Activated naive CD4-positive, alpha-beta T cell treated with anti-CD3 and anti-CD28 coated beads for 36 hours (primary cell): ENCODE measurements at regions of chrX and their contacts with region 1.

Region 1: DNA sequence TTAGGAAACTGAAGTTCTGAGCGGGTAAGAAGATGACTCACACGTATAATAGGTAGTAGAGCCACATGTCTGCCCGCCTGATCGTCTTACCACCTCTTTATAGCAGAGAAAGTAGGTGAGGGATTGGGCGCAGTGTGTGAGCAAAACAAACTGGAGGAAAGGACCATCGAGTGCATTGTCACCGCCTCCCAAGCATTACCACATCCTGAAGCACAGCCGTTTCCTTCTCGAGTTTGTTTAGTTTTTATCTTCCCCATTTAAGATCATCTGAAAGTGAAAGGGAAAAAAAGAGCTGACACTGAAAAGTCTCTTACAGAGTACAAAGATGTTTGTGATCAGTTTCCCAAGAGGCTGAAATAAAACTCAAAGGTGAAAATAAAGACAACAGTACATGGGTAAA is 14.8 kb downstream of the PDK3 start:
- DNase-seq: peak; percentile 86
- H3K4me3 Mint-ChIP-seq: peak overlapping the region; percentile 69
- H3K27ac Mint-ChIP-seq: peak overlapping the region; percentile 96
- H3K4me1 Mint-ChIP-seq: peaks cover 69% of the 10 kb centered on the region
- H3K27me3 Mint-ChIP-seq: no peaks in the 10 kb centered on the region

Region 2: GRCh38 chrX:23952984-23953907 is 526.7 kb before region 1 on chrX:
- CTCF ChIA-PET with region 1: no interaction called
- intact Hi-C with region 1: loop called (anchors 2 kb)
- DNase-seq: peak; percentile 70
- H3K4me3 Mint-ChIP-seq: peak overlapping the region; percentile 79
- H3K27ac Mint-ChIP-seq: peak overlapping the region; percentile 97
- H3K4me1 Mint-ChIP-seq: peaks cover 16% of the 10 kb centered on the region
- H3K27me3 Mint-ChIP-seq: no peaks in the 10 kb centered on the region

Region 3: DNA sequence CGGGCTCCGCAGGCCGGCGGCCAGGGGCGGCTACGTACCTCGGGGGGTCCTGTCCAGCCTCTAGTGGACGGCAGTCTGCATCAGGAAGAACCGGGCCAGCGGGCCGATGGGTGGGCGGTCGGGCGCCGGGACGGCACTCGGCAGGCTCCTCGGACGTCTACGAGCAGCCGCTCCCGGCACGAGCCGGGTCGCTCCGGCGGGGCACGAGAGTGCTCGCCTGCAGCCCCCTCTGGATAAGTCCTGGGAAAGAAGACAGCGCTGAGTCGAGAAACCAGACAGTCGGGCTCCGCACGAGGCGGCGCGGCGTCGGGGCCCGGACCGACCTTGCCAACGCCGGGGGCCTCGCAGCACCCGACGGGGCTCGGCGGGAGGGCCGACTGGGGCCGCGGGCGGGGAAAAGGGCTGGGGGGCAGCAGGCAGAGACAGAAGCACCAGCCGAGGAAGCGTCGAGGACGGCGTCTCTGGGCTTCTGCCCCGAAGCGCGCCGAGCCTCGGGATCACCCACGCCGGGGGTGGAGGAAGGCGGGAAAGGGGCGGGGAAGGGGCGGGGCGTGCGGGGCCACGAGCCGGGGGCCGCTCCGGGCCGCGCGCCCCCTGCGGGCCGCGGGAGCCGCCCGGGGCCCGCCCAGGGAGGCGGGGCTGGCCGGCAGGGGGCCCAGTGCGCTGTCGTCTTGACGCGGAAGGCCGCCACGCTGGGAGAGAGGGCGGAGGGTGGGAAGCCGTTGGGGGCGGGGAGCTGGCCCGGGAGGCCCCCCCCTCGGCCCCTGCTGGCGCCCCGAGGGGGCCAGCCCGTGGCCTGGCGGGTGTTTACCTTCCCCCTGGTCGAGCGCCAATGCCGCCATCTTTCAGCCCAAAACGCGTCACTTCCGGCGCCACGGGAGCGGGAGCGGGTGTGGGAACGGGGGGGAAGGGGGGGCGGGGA is 454.8 kb before region 1 on chrX:
- CTCF ChIA-PET with region 1: no interaction called
- intact Hi-C with region 1: loop called (anchors 10 kb)
- DNase-seq: peak; percentile 89
- H3K4me3 Mint-ChIP-seq: peak overlapping the region; percentile 85
- H3K27ac Mint-ChIP-seq: peak overlapping the region; percentile 71
- H3K4me1 Mint-ChIP-seq: peaks cover 20% of the 10 kb centered on the region
- H3K27me3 Mint-ChIP-seq: no peaks in the 10 kb centered on the region

Region 4: GRCh38 chrX:24464836-24465531 is 14.9 kb before region 1 on chrX and contains the start of gene PDK3:
- CTCF ChIA-PET with region 1: interaction called, 3 read pairs
- intact Hi-C with region 1: loop called (anchors 1 kb)
- DNase-seq: peak; percentile 85
- H3K4me3 Mint-ChIP-seq: peak within 1 kb of the TSS; percentile 81
- H3K27ac Mint-ChIP-seq: peak within 1 kb of the TSS; percentile 82
- H3K4me1 Mint-ChIP-seq: peaks cover 30% of the 10 kb centered on the region
- H3K27me3 Mint-ChIP-seq: no peaks in the 10 kb centered on the region
- total RNA-seq, gene PDK3: 31.7 to 32.3 TPM

Region 5: DNA sequence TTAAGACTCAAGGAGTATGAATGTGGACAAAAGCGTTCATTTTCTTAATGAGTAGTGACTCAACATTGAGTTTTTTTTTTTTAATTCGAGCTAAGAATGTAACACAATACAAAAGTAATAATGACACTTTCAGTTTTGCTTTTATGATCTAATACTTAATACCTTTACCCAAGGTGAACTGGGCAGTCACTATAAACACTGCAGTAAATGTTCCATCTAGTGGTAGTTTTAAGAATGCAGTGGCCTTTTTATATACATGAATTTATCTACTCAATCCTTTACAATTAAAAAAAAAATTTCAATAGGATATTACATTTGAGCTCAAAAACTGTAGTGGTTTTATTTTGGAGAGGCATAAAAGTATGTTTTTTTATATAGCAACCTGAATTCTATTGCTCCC is 19.1 kb after region 1 on chrX:
- CTCF ChIA-PET with region 1: interaction called, 23 read pairs
- intact Hi-C with region 1: loop called (anchors 1 kb)
- DNase-seq: no peak
- H3K4me3 Mint-ChIP-seq: no peak overlapping the region
- H3K27ac Mint-ChIP-seq: no peak overlapping the region
- H3K4me1 Mint-ChIP-seq: peaks cover 24% of the 10 kb centered on the region
- H3K27me3 Mint-ChIP-seq: no peaks in the 10 kb centered on the region

Region 6: DNA sequence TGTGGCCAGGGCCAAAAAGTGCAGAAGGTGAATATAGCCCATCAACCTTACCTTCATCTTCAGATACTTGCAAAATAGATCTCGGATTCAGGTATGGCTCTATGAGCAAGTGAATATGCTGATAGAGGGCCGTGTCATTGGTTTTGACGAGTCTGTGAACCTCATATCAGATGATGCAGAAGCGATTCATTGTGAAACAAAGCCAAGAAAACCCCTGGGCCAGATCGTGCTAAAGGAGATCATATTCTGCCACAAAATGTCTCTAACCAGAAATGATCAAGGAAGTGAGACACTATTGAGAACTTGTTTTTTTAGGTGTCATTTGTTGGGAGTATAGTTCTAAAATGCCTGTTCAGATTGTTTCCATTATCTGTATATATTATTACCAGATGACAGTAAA is 33.5 kb after region 1 on chrX:
- CTCF ChIA-PET with region 1: interaction called, 4 read pairs
- intact Hi-C with region 1: loop called (anchors 1 kb)
- DNase-seq: peak; percentile 75
- H3K4me3 Mint-ChIP-seq: no peak overlapping the region
- H3K27ac Mint-ChIP-seq: peak overlapping the region; percentile 58
- H3K4me1 Mint-ChIP-seq: peaks cover 16% of the 10 kb centered on the region
- H3K27me3 Mint-ChIP-seq: no peaks in the 10 kb centered on the region

Region 7: DNA sequence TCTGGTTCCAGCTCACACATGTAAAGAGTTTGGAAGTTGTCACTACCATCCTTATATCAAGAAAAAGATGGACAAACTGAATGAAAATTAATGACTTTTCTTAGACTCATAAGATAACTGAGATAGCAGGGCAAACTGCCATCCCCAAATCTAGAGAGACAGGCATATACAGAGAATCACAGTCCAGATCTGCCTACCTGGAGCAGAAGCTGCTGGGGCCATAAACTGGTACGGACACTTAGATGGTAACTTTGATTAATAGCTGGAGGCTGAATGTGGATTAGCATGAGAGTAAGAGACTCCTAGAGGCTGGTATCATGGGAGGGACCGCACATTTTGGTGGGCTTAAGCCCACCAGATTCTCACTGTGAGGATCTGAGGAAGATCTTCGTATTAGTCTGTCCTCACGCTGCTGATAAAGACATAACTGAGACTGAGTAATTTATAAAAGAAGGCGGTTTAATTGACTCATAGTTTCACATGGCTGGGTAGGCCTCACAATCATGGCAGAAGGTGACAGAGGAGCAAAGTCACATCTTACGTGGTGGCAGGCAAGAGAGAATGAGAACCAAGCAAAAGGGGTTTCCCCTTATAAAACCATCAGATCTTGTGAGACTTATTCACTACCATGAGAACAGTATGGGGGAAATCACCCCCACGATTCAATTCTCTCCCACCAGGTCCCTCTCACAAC is 203.0 kb after region 1 on chrX:
- CTCF ChIA-PET with region 1: no interaction called
- intact Hi-C with region 1: loop called (anchors 2 kb)
- DNase-seq: peak; percentile 72
- H3K4me3 Mint-ChIP-seq: no peak overlapping the region
- H3K27ac Mint-ChIP-seq: peak overlapping the region; percentile 59
- H3K4me1 Mint-ChIP-seq: peaks cover 19% of the 10 kb centered on the region
- H3K27me3 Mint-ChIP-seq: peaks cover 6% of the 10 kb centered on the region